Activated naive CD4-positive, alpha-beta T cell treated with anti-CD3 and anti-CD28 coated beads, Interleukin-2, amount 10 ng/mL, durations not matched to agents 7 days and 5 days (primary cell): ENCODE measurements at regions of chr9 and their contacts with region 1.

Region 1: GRCh38 chr9:114587385-114588202 is at the start of gene ATP6V1G1:
- DNase-seq: peak; percentile 100
- H3K4me3 Mint-ChIP-seq: peak within 1 kb of the TSS; percentile 97
- H3K27ac Mint-ChIP-seq: peak within 1 kb of the TSS; percentile 92
- H3K4me1 Mint-ChIP-seq: peaks cover 45% of the 10 kb centered on the region
- H3K27me3 Mint-ChIP-seq: peaks cover 7% of the 10 kb centered on the region

Region 2: GRCh38 chr9:114434878-114435311 is 152.7 kb before region 1 on chr9:
- CTCF ChIA-PET with region 1: interaction called, 13 read pairs
- DNase-seq: peak; percentile 30
- H3K4me3 Mint-ChIP-seq: no peak overlapping the region
- H3K27ac Mint-ChIP-seq: no peak overlapping the region
- H3K4me1 Mint-ChIP-seq: peaks cover 4% of the 10 kb centered on the region
- H3K27me3 Mint-ChIP-seq: peaks cover 7% of the 10 kb centered on the region

Region 3: GRCh38 chr9:114505187-114506081 is 82.2 kb before region 1 on chr9 and contains the start of gene WHRN:
- CTCF ChIA-PET with region 1: interaction called, 10 read pairs
- DNase-seq: peak; percentile 94
- H3K4me3 Mint-ChIP-seq: peak within 1 kb of the TSS; percentile 75
- H3K27ac Mint-ChIP-seq: peak within 1 kb of the TSS; percentile 24
- H3K4me1 Mint-ChIP-seq: peaks cover 13% of the 10 kb centered on the region
- H3K27me3 Mint-ChIP-seq: peaks cover 97% of the 10 kb centered on the region

Region 4: DNA sequence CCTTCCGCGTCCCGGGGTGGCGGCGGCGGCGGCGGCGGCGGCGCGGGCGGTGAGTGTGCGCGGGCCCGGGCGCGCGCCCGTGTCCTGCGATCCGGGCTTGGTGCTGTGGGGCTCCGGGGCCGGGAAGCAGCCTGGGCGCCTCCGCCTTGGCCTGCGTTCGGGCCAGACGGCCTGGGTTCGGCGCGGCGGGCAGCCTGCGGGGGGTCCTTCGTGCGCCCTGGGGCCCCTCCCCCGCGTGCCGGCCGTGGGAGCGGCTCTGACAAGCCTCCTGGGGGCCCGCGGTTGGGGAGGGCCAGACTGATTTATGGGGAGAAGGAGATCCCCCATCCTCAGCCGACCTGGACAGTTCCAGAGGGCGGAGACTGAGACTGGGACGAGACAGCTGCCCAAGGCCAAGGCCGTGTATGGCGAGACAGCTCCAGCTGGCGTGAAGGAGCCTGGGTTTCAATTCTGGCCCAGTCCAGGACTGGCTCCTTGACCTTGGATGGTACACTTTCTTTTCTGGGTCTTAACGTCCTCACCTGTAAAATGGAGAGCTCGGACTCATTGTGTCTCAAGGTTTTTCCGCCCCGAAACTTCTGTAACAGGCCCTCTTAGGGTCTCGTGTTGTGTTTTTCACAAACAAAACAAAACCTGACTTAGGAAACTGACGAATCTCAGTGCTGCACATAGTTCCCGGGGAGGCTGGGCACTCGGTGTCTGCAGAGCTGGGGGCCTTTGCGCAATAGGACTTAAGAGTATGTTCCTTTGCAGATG is 24.1 kb after region 1 on chr9:
- CTCF ChIA-PET with region 1: interaction called, 18 read pairs
- DNase-seq: peak; percentile 41
- H3K4me3 Mint-ChIP-seq: peak overlapping the region; percentile 84
- H3K27ac Mint-ChIP-seq: peak overlapping the region; percentile 94
- H3K4me1 Mint-ChIP-seq: peaks cover 58% of the 10 kb centered on the region
- H3K27me3 Mint-ChIP-seq: no peaks in the 10 kb centered on the region